Heart left ventricle (tissue), 16 donors: ENCODE measurements at regions of chr1 and their contacts with region 1.

Region 1: DNA sequence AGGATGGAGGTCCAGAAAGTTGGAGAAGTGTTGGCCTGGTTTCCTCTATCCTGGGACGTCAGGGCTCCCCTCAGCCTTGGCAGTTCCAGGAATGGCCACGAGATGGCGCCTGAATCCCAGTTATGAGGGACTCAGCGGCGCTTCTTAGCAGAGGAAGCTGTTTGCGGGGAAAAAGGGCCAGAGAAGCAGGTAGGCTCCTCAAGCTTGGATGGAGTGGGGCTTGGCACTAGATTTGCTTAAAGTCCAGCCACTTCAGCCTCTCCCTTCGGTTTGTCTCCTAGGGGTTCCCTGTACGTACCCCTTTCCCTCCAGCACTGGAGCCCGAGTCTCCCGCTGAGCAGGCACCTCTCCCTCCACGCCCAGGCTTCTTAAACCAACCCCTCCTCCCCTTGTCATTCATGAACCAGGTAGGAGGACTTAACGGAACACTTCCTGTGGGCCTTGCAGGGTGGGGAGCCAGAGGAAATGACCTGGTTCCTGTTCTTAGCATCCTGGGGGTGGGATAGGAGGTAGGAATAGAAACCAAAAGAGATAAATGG is 32.0 kb upstream of the TENT5B start:
- DNase-seq: peak; percentile 84 to 93 (median 86)
- ATAC-seq: peak; percentile 77 to 93 (median 90)
- H3K4me3 ChIP-seq: peak overlapping the region in 9 of 12 donors; percentile 20 to 49 (median 29)
- H3K27ac ChIP-seq: peak overlapping the region in 7 of 12 donors; percentile 5 to 60 (median 43)
- H3K4me1 ChIP-seq: peaks cover 0 to 22% (median 10%) of the 10 kb centered on the region in 12 donors
- H3K27me3 ChIP-seq: no peaks in the 10 kb centered on the region
- CTCF ChIP-seq: peak; percentile 97 to 99 (median 98)
- POLR2A ChIP-seq: no peak

Region 2: GRCh38 chr1:26993237-26994019 is 51.3 kb before region 1 on chr1 and contains the start of gene TRNP1:
- intact Hi-C with region 1: loop called in 7 of 10 experiments (anchors 2 to 10 kb)
- DNase-seq: peak; percentile 60 to 86 (median 74)
- ATAC-seq: peak; percentile 53 to 75 (median 70)
- H3K4me3 ChIP-seq: peak within 1 kb of the TSS; percentile 62 to 92 (median 68)
- H3K27ac ChIP-seq: peak within 1 kb of the TSS in 10 of 12 donors; percentile 46 to 79 (median 61)
- H3K4me1 ChIP-seq: peaks cover 6 to 44% (median 25%) of the 10 kb centered on the region in 12 donors
- H3K27me3 ChIP-seq: peaks cover 0 to 41% (median 13%) of the 10 kb centered on the region in 9 donors
- CTCF ChIP-seq: no peak
- POLR2A ChIP-seq: peak in 1 of 2 donors; percentile 50
- total RNA-seq, gene TRNP1: 16.6 to 68.5 (median 21.7) TPM

Region 3: DNA sequence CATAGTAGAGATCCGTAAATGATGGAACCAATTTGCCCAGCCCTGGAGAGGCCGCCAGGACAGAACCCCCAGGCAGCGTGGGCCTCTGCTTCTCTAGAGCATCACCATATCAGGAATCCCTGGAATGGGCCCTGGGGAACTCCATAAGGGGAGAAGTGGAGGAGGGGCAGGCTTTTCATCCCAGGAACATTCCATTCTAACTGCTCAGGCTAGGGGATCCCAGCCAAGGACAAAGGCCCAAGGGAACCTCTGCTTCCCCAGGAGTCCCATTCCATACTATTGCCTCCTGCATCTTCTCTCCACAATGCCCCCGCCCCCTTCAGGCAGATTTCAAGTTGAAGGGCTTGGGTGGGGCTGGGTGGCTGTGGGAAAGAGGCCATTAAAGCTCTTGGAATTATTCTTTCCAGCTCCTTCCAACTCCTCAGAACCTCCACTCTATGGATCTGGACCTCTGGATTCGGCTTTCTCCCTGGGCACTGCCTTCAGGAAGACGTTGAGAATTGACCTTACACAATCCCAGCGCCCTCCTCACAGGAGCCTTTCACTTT is 45.2 kb before region 1 on chr1:
- intact Hi-C with region 1: loop called in 7 of 10 experiments (anchors 2 to 10 kb)
- DNase-seq: peak; percentile 73 to 87 (median 79)
- ATAC-seq: peak; percentile 75 to 86 (median 84)
- H3K4me3 ChIP-seq: no peak overlapping the region
- H3K27ac ChIP-seq: peak overlapping the region; percentile 58 to 91 (median 80)
- H3K4me1 ChIP-seq: peaks cover 13 to 75% (median 52%) of the 10 kb centered on the region in 12 donors
- H3K27me3 ChIP-seq: peaks cover 0 to 23% (median 0%) of the 10 kb centered on the region in 9 donors
- CTCF ChIP-seq: no peak
- POLR2A ChIP-seq: no peak

Region 4: DNA sequence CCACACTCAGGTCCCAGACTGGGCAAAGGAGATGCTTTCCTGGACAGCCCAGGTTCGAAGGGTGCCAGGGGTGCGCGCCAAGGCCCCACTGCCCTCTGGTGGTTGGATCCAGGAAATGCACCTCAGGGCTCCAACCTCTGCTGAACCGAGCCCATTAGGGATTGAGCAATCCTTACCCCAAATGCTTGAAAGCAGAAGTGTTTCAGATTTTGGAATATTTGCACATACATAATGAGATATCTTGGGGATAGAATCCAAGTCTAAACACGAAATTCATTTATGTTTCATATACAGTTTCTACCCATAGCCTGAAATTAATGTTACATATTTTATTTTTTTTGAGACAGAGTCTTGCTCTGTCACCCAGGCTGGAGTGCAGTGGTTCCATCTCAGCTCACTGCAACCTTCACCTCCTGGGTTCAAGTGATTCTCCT is 52.8 kb after region 1 on chr1:
- intact Hi-C with region 1: loop called (anchors 1 to 2 kb)
- DNase-seq: peak; percentile 76 to 83 (median 78)
- ATAC-seq: peak; percentile 50 to 63 (median 58)
- H3K4me3 ChIP-seq: no peak overlapping the region
- H3K27ac ChIP-seq: peak overlapping the region in 6 of 12 donors; percentile 23 to 91 (median 84)
- H3K4me1 ChIP-seq: peaks cover 3 to 40% (median 28%) of the 10 kb centered on the region in 12 donors
- H3K27me3 ChIP-seq: no peaks in the 10 kb centered on the region
- CTCF ChIP-seq: peak; percentile 94 to 99 (median 98)
- POLR2A ChIP-seq: no peak

Region 5: GRCh38 chr1:27257155-27257554 is 212.5 kb after region 1 on chr1:
- intact Hi-C with region 1: no loop called
- DNase-seq: no peak
- ATAC-seq: no peak
- H3K4me3 ChIP-seq: no peak overlapping the region
- H3K27ac ChIP-seq: no peak overlapping the region
- H3K4me1 ChIP-seq: peaks cover 0 to 14% (median 0%) of the 10 kb centered on the region in 12 donors
- H3K27me3 ChIP-seq: no peaks in the 10 kb centered on the region
- CTCF ChIP-seq: no peak
- POLR2A ChIP-seq: no peak

Region 6: GRCh38 chr1:27275696-27276095 is 231.0 kb after region 1 on chr1:
- intact Hi-C with region 1: loop called in 6 of 10 experiments (anchors 5 to 10 kb)
- DNase-seq: no peak
- ATAC-seq: no peak
- H3K4me3 ChIP-seq: no peak overlapping the region
- H3K27ac ChIP-seq: no peak overlapping the region
- H3K4me1 ChIP-seq: peaks cover 0 to 5% (median 0%) of the 10 kb centered on the region in 12 donors
- H3K27me3 ChIP-seq: no peaks in the 10 kb centered on the region
- CTCF ChIP-seq: no peak
- POLR2A ChIP-seq: no peak

Region 7: GRCh38 chr1:27284425-27285273 is 240.0 kb after region 1 on chr1:
- intact Hi-C with region 1: loop called in 8 of 10 experiments (anchors 1 to 10 kb)
- DNase-seq: peak; percentile 72 to 89 (median 79)
- ATAC-seq: peak in 3 of 4 donors; percentile 79 to 82 (median 80)
- H3K4me3 ChIP-seq: no peak overlapping the region
- H3K27ac ChIP-seq: no peak overlapping the region
- H3K4me1 ChIP-seq: no peaks in the 10 kb centered on the region
- H3K27me3 ChIP-seq: no peaks in the 10 kb centered on the region
- CTCF ChIP-seq: peak; percentile 79 to 92 (median 88)
- POLR2A ChIP-seq: no peak